Naive thymus-derived CD4-positive, alpha-beta T cell (primary cell): ENCODE measurements at regions of chr3 and their contacts with region 1.

Region 1: DNA sequence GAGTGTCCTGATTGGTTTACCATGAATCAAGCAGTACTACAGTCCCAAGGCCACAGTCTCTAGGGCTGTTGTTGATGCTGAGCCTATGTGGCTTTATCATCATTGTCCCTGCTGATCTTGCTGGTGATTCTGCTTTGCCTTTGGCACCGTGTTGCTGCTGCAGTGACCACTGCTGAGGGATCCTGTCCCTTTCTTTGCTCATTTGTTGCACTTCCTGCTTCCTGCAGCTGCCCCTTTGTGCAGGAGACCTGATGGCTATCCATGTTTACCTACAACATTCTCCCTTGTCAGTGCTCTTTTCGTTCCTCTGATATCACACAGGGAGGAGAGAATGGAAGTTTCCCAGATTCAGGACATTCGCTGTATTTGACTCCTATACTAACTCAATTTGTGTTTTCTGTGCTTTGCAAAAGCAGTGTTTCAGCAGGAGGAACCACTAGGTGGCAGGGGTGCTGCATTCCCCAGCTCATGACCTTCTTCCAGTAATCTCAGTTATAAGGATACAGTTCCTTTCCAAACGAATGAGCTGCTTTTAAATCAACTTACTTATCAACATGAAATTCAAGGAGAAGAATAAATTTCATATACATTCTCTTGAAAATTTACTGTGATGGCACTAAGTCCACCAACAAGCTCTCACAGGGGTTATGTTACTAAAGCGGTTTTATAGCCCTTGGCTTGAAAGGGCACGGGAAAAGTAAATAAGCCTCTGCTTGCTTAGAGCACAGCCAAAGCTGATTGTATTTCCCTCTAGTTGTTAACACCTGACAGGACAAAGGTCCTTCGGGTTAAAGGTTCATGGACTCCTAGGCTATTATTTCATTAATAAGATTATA is 9.7 kb upstream of the THUMPD3 start:
- DNase-seq: peak; percentile 21 to 57 (median 51)
- ATAC-seq: peak; percentile 85
- H3K4me3 ChIP-seq: no peak overlapping the region
- H3K4me3 Mint-ChIP-seq: no peak overlapping the region
- H3K27ac ChIP-seq: no peak overlapping the region
- H3K27ac Mint-ChIP-seq: peak overlapping the region in 2 of 9 donors; percentile 13 to 17
- H3K4me1 ChIP-seq: no peaks in the 10 kb centered on the region
- H3K4me1 Mint-ChIP-seq: peaks cover 4 to 13% (median 5%) of the 10 kb centered on the region in 7 donors
- H3K27me3 ChIP-seq: no peaks in the 10 kb centered on the region
- H3K27me3 Mint-ChIP-seq: peaks cover 0 to under 1% (median 0%) of the 10 kb centered on the region in 5 donors

Region 2: GRCh38 chr3:9503283-9503682 is 150.1 kb after region 1 on chr3:
- CTCF ChIA-PET with region 1: interaction called, 4 read pairs
- POLR2A ChIA-PET with region 1: no interaction called
- intact Hi-C with region 1: loop called (anchors 1 kb)
- DNase-seq: peak; percentile 38 to 71 (median 60)
- ATAC-seq: peak; percentile 71
- H3K4me3 ChIP-seq: no peak overlapping the region
- H3K4me3 Mint-ChIP-seq: no peak overlapping the region
- H3K27ac ChIP-seq: no peak overlapping the region
- H3K27ac Mint-ChIP-seq: no peak overlapping the region
- H3K4me1 ChIP-seq: peaks cover 7 to 11% of the 10 kb centered on the region in 2 donors
- H3K4me1 Mint-ChIP-seq: peaks cover 0 to 9% (median 5%) of the 10 kb centered on the region in 7 donors
- H3K27me3 ChIP-seq: peaks cover 5 to 15% of the 10 kb centered on the region in 2 donors
- H3K27me3 Mint-ChIP-seq: peaks cover 28 to 44% (median 34%) of the 10 kb centered on the region in 5 donors